B cell (primary cell): ENCODE measurements at regions of chr1 and their contacts with region 1.

Region 1: DNA sequence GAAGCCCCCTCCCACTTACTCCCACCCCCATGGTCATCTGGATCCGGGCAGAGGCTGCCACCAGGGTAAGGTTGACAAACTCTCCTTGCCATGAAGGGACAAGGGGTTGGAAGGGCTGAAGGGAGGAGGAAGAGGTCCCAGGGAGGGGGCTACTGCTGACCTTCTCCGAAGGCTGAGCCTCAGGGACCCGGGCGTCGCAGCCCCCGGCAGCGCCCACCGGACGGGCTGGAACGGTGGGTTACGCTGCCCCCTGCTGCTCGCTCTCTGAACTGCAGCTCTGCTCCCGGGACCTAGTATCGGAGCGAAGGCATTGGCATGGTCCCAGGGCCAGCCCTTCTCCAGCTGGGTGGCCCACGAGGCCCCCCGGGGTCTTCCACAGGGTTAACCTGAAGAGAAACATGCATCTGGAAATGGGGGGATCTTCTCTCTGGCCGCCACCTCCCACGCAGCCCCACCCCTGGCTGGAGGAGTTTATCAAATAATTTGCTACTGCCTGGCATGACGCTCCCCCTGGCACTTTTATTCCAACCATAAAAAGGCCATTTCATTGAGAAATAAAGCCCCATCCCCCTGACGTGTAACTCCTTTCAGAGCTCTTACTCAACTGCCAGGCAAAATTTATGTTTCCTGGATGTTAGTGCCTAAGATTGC is 70.4 kb upstream of the TARDBP start:
- DNase-seq: peak; percentile 65
- ATAC-seq: peak; percentile 61
- H3K4me3 ChIP-seq: no peak overlapping the region
- H3K4me3 Mint-ChIP-seq: no peak overlapping the region
- H3K27ac ChIP-seq: no peak overlapping the region
- H3K27ac Mint-ChIP-seq: no peak overlapping the region
- H3K4me1 ChIP-seq: peaks cover 7 to 16% of the 10 kb centered on the region in 2 donors
- H3K4me1 Mint-ChIP-seq: peaks cover 8% of the 10 kb centered on the region
- H3K27me3 ChIP-seq: peaks cover 0 to 31% (median 12%) of the 10 kb centered on the region in 4 experiments
- H3K27me3 Mint-ChIP-seq: peaks cover 46% of the 10 kb centered on the region
- CTCF ChIP-seq: peak; percentile 95

Region 2: DNA sequence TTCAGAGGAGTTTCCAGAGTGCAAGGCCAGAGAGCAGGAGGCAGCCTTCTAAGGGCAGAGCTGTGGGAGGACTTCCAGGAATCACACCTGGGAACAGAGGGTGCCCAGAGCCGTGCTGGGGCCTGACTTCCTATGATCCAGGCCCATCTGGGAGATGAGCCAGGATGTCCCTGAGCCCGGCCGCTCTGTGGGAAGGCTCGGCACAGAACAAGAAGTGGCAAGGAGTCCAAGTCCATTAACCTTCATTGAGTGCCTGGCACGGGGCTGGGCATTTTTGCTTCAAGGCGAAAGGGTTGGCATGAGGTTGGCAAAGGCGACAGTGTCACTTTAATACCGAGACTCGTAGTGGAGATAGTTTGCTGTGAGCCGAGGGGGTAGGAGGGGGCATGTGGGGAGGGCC is 1335.1 kb before region 1 on chr1:
- CTCF ChIA-PET with region 1: no interaction called
- POLR2A ChIA-PET with region 1: no interaction called
- intact Hi-C with region 1: no loop called
- DNase-seq: no peak
- ATAC-seq: no peak
- H3K4me3 ChIP-seq: no peak overlapping the region
- H3K4me3 Mint-ChIP-seq: no peak overlapping the region
- H3K27ac ChIP-seq: no peak overlapping the region
- H3K27ac Mint-ChIP-seq: no peak overlapping the region
- H3K4me1 ChIP-seq: no peaks in the 10 kb centered on the region
- H3K4me1 Mint-ChIP-seq: no peaks in the 10 kb centered on the region
- H3K27me3 ChIP-seq: no peaks in the 10 kb centered on the region
- H3K27me3 Mint-ChIP-seq: no peaks in the 10 kb centered on the region
- CTCF ChIP-seq: no peak

Region 3: DNA sequence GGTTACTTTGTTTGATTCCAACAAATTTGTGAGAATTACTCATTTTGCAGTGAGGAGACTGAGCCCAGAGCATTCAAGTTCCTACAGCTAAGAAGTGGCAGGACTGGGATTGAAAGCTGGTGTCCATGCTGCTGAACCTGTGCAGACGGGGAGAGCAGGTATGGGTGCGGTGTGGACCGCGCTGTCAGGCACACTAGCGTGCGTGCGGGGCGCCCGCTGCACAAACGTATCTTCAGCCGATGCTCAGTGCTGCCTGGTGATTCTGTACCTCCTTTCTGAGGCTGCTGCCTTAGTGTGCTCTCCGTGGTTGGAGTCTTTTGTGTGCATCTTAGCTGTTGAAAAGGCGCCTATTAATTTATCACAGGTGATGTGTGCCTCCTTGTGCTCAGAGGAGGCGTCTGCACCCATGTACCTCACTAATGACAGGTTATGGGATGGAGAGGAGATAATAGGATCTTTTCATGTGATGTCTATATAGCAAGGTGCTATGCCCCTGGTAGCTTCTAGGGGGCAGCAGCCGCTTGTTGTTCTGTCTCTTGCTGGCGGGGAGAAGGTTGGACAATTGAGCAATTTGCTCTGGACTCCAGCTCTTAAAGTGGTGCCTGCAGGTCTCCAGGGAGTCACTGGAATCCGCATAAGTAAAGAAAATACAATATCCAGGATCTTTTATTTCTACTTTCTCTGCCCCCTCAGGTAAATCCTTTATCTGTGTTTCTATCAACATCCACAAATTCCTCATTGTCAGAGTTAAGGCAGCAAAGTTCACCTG is 434.7 kb before region 1 on chr1:
- CTCF ChIA-PET with region 1: interaction called, 10 read pairs
- POLR2A ChIA-PET with region 1: no interaction called
- intact Hi-C with region 1: no loop called
- DNase-seq: peak; percentile 58
- ATAC-seq: peak; percentile 68
- H3K4me3 ChIP-seq: no peak overlapping the region
- H3K4me3 Mint-ChIP-seq: no peak overlapping the region
- H3K27ac ChIP-seq: peak overlapping the region in 1 of 2 donors; percentile 2
- H3K27ac Mint-ChIP-seq: peak overlapping the region; percentile 38
- H3K4me1 ChIP-seq: peaks cover 22 to 29% of the 10 kb centered on the region in 2 donors
- H3K4me1 Mint-ChIP-seq: peaks cover 38% of the 10 kb centered on the region
- H3K27me3 ChIP-seq: no peaks in the 10 kb centered on the region
- H3K27me3 Mint-ChIP-seq: no peaks in the 10 kb centered on the region
- CTCF ChIP-seq: peak; percentile 84

Region 4: DNA sequence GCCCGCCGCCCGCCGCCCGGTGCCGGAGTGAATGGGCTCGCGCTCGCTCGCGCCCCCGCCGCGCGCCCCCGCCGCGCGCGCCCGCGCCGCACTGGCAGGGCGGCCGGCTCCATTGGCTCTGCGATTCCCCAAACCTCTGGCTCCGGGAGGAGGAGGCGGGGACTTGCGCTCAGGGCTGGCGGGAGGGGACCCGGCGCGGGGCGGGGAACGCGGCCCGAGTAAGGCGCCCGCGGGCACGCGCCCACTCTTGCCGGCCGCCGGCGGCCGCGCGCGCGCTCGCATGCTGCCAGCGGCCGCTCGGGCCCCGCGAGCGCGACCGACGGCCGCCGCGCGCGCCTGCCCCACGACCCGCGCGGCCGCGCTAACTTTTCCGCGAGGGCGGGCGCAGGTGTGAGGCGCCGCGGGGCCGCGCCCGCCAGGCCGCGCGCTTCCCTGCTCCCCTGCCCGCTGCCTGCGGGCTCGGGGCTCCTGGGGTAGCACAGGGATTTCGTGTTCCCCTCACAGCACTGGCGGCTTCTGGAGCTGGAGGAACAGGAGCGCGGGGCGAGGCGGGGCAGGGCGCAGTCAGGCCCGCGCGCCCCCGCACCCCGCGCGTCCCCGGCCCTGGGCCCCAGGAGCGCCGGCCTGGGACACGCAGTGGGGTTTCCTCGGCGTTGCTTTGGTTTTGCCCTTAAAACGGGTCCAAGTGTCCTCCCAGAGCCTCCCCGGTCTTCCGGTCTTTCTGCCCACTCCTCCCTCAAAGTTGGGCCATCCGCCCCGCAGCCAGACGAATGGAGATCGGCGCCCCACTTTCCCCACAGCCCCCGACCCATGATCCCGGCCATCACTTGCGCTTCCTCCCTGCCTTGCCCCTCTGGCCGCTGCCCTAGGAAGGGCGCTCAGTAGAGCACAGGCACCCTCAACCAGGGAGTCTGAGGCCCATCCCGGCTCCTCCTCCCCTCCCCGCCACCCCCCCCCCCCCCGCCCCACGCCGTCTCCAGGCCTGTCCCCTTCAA is 247.1 kb before region 1 on chr1:
- CTCF ChIA-PET with region 1: no interaction called
- POLR2A ChIA-PET with region 1: no interaction called
- intact Hi-C with region 1: loop called (anchors 5 kb)
- DNase-seq: peak; percentile 92
- ATAC-seq: peak; percentile 73
- H3K4me3 ChIP-seq: peak overlapping the region in 4 of 5 experiments; percentile 24 to 63 (median 50)
- H3K4me3 Mint-ChIP-seq: peak overlapping the region; percentile 87
- H3K27ac ChIP-seq: peak overlapping the region in 1 of 2 donors; percentile 68
- H3K27ac Mint-ChIP-seq: peak overlapping the region; percentile 85
- H3K4me1 ChIP-seq: peaks cover 16 to 24% of the 10 kb centered on the region in 2 donors
- H3K4me1 Mint-ChIP-seq: peaks cover 19% of the 10 kb centered on the region
- H3K27me3 ChIP-seq: no peaks in the 10 kb centered on the region
- H3K27me3 Mint-ChIP-seq: peaks cover 8% of the 10 kb centered on the region
- CTCF ChIP-seq: no peak